Lower leg skin (tissue), 4 donors: ENCODE measurements at regions of chr1 and their contacts with region 1.

Region 1: DNA sequence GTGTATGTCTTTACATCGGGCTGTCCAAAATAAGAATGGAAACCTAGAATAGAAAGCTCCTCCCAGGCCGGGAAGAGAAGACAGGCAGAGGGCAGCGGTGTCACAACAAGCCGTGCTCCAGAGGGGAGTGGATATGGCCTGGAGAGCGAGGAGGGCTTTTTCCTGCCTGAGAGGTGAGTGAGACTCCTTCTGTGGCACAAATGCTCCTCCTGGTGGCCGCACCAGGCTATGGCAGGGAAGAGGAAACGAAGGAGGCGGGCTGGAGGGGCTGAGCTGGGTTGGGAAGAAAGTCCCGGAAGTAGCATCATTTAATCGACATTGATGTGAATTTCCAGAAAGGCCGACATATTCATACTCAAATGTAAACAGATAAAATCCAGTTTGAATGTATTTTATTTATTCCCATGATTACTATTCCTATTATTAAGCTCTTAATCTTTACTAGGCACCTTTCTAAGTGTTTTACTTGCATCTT is 54.7 kb downstream of the MEF2D start:
- DNase-seq: peak; percentile 70 to 95
- H3K4me3 ChIP-seq: no peak overlapping the region
- CTCF ChIP-seq: peak in 2 of 3 donors; percentile 15 to 92
- POLR2A ChIP-seq: no peak

Region 2: DNA sequence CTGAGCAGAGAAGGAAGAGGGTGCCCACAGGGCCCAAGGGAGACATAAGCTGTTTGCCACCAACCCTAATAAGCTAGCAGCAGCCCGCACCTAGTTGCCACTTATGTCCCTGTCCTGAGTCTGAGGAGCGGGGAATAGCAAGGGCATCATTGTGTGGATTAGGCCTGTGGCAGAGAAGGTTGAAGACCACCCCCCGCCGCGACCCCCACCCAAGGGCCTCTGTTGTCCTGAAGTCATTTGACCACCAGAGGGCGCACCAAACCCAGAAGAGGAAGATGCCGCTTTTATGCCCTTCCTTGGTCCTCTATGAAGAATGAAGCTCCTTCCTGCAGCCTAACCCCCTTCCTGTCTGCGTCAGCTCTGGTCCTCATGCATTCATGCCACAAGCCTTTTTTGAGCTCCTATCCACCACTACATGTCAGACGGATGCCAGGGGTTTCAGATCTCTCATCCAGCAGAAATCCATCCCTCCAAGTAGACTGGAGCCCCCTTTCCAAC is 60.2 kb before region 1 on chr1:
- intact Hi-C with region 1: loop called (anchors 2 kb)
- DNase-seq: peak in 1 of 2 donors; percentile 27
- H3K4me3 ChIP-seq: no peak overlapping the region
- CTCF ChIP-seq: peak in 1 of 3 donors; percentile 89
- POLR2A ChIP-seq: no peak

Region 3: DNA sequence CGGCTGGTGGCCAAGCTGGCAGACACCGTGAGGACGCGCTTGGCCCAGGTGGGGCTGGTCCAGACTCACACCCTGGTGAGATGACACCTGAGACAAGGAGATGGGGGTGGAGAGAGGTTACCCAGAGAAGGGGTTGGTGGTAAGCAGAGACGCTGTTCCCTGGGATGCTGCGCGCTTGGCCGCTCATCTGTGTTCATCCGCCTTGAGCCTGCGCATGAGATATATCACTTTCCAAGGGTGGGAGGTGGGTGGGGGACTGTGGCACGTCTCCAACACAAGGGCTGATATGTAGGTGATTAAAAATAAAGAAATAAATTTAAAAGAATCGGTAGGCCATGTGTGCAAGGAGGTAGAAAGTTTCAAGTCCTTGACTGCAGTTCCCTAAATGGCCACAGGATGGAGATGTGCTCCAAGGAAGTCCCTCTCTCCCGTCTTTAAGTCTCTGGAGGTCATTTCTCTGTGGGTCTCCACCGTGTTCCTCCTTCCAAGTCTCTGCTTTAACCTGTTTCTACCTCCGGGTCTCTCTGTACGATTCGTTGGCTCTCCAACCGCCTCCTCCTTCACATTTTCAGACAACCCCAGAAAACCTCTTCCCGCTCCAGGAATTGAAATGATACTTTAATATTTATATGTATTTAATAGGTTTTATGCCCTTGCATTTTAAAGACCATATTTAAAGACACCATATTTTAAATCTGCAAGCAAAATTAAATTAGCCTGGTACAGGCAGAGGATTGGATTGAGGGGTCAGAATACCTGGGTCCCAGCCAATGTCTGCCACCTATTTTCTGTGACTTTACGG is 138.2 kb after region 1 on chr1:
- intact Hi-C with region 1: loop called (anchors 10 kb)
- DNase-seq: peak; percentile 80 to 90
- H3K4me3 ChIP-seq: no peak overlapping the region
- CTCF ChIP-seq: peak in 1 of 3 donors; percentile 41
- POLR2A ChIP-seq: no peak